CD4-positive, alpha-beta T cell (primary cell): ENCODE measurements at regions of chr15 and their contacts with region 1.

Region 1: DNA sequence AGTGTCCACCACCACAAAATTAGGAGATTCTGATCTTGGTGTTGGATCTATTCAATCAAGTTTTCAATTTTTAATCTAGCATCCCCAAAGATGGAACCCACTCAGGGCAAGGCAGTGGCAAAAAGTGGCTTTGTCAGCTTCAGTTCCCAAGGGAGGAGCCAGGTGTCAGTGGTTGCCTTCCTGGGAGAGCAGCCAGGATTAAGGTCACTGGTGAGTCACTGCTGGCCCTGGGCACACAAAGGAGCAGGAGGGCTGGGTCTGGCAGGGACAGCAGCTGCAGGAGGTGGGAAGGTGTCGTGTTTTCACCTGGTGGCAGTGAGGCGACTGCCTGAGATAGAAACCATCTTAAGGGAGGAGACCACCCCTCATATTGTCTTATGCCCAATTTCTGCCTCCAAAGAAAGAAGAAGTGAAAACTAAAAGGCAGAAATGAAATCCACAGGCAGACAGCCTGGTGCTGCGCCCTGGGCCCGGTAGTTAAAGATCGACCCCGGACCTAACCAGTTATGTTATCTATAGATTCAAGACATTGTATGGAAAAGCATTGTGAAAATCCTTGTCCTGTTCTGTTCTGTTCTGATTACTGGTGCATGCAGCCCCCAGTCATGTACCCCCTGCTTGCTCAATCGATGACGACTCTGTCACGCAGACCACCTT is 5.9 kb upstream of the KLHL25 start:
- DNase-seq: no peak
- ATAC-seq: no peak
- H3K4me3 ChIP-seq: no peak overlapping the region
- H3K4me3 Mint-ChIP-seq: no peak overlapping the region
- H3K27ac ChIP-seq: no peak overlapping the region
- H3K27ac Mint-ChIP-seq: no peak overlapping the region
- H3K4me1 ChIP-seq: peaks cover 4% of the 10 kb centered on the region
- H3K4me1 Mint-ChIP-seq: peaks cover 7% of the 10 kb centered on the region
- H3K27me3 ChIP-seq: no peaks in the 10 kb centered on the region
- H3K27me3 Mint-ChIP-seq: no peaks in the 10 kb centered on the region
- CTCF ChIP-seq: no peak

Region 2: GRCh38 chr15:85785887-85786780 is 14.5 kb before region 1 on chr15:
- CTCF ChIA-PET with region 1: no interaction called
- POLR2A ChIA-PET with region 1: interaction called, 3 read pairs
- intact Hi-C with region 1: loop called in 1 of 2 experiments (anchors 2 kb)
- DNase-seq: peak in 1 of 14 experiments; percentile 38
- ATAC-seq: no peak
- H3K4me3 ChIP-seq: peak overlapping the region; percentile 28
- H3K4me3 Mint-ChIP-seq: peak overlapping the region; percentile 85
- H3K27ac ChIP-seq: peak overlapping the region; percentile 45 to 47
- H3K27ac Mint-ChIP-seq: peak overlapping the region; percentile 96
- H3K4me1 ChIP-seq: peaks cover 41% of the 10 kb centered on the region
- H3K4me1 Mint-ChIP-seq: peaks cover 64% of the 10 kb centered on the region
- H3K27me3 ChIP-seq: no peaks in the 10 kb centered on the region
- H3K27me3 Mint-ChIP-seq: no peaks in the 10 kb centered on the region
- CTCF ChIP-seq: no peak

Region 3: DNA sequence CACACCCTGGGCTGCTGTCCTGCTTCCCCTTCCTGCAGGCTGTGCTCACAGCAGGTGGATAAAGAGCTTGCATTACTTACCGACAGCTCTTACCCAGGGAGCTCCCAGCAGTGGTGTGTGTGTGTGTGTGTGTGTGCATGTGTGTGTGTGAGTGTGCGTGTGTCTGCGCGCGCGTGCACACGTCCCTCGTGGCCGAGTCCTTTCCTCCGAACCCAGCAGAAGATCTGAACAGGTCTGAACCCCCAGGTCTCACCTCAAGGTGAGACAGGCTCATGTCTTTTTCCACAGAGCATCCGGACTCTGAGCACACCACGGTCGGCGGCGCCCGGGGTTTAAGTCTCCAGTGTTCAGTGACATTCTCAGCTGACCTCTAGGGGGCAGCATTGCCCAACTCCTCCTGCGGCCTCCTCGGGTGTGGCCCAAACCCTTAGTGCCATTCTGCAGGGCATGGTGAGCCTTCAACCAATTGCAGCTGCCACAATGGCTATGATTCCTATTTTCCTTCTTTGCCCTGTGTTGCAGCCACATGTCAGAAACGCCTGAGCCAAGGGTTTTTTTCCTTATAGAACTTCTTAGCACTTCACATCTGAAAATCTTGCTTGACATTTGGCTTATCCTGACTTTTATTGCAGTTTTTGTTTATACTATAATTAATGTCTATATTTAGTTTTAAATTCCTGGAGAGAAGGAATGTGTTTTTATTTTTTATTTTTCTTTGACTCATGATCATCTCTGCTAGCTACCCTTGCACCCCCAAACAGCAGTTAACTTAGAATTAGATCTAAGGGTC is 58.2 kb after region 1 on chr15:
- CTCF ChIA-PET with region 1: no interaction called
- POLR2A ChIA-PET with region 1: no interaction called
- intact Hi-C with region 1: no loop called
- DNase-seq: peak; percentile 55 to 85 (median 70)
- ATAC-seq: peak; percentile 85
- H3K4me3 ChIP-seq: no peak overlapping the region
- H3K4me3 Mint-ChIP-seq: peak overlapping the region; percentile 44
- H3K27ac ChIP-seq: no peak overlapping the region
- H3K27ac Mint-ChIP-seq: no peak overlapping the region
- H3K4me1 ChIP-seq: peaks cover 7% of the 10 kb centered on the region
- H3K4me1 Mint-ChIP-seq: peaks cover 10% of the 10 kb centered on the region
- H3K27me3 ChIP-seq: peaks cover 0 to 4% of the 10 kb centered on the region in 2 experiments
- H3K27me3 Mint-ChIP-seq: peaks cover 33% of the 10 kb centered on the region
- CTCF ChIP-seq: peak; percentile 71